ENCODE measurements at regions of chr15 and their contacts with region 1.

Region 1: GRCh38 chr15:23994273-23994672 is 307.2 kb upstream of the NDN start:
- DNase-seq: no peak
- ATAC-seq: no peak
- H3K4me3 ChIP-seq: no peak overlapping the region
- H3K27ac ChIP-seq: no peak overlapping the region
- H3K4me1 ChIP-seq: no peaks in the 10 kb centered on the region
- H3K27me3 ChIP-seq: no peaks in the 10 kb centered on the region
- CTCF ChIP-seq: no peak

Region 2: DNA sequence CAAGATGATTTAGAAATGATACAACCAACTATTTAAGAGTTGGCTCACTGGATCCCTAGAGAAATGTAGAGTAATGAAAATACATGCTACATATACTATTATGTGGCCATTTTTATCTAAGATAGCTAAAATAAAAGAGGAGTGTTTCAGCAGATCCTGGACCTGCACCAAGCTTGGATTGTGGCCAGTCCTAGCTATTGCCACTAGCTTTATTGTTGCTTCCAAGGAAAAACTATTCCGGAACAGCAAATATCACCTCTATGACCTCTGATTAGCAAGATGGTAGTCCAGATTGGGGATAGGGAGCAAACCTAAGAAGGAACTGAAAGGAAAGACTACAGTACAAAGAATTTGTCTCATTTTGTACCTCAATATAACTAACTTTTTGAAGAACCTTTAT is 243.5 kb before region 1 on chr15:
- intact Hi-C with region 1: no loop called
- DNase-seq: no peak
- ATAC-seq: no peak
- H3K4me3 ChIP-seq: no peak overlapping the region
- H3K27ac ChIP-seq: no peak overlapping the region
- H3K4me1 ChIP-seq: no peaks in the 10 kb centered on the region
- H3K27me3 ChIP-seq: no peaks in the 10 kb centered on the region
- CTCF ChIP-seq: no peak

Region 3: DNA sequence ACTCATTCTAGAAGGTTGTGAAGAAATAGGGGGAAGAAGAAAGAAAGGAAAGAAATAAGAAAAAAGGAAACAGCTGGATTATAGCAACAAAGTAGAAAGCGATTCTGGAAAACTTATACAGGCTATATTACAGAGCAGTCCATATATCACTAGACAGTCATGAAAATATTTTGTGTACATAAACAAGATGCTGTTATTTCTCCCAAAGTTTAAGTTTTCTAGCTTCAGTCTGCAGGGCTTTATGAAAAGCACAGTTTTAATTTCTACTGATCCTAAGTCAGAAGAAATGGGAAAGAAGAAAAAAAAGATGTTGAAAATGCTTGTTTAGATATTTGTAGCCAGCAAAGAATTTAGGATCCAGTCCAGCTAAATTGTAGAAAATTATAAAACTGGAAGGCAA is 14.2 kb after region 1 on chr15:
- intact Hi-C with region 1: loop called in 1 of 2 experiments (anchors 1 kb)
- DNase-seq: no peak
- ATAC-seq: no peak
- H3K4me3 ChIP-seq: no peak overlapping the region
- H3K27ac ChIP-seq: no peak overlapping the region
- H3K4me1 ChIP-seq: no peaks in the 10 kb centered on the region
- H3K27me3 ChIP-seq: no peaks in the 10 kb centered on the region
- CTCF ChIP-seq: no peak

Region 4: GRCh38 chr15:24223739-24224138 is 229.5 kb after region 1 on chr15:
- intact Hi-C with region 1: no loop called
- DNase-seq: no peak
- ATAC-seq: no peak
- H3K4me3 ChIP-seq: no peak overlapping the region
- H3K27ac ChIP-seq: no peak overlapping the region
- H3K4me1 ChIP-seq: no peaks in the 10 kb centered on the region
- H3K27me3 ChIP-seq: no peaks in the 10 kb centered on the region
- CTCF ChIP-seq: no peak